B cell (primary cell): ENCODE measurements at regions of chr1 and their contacts with region 1.

Region 1: GRCh38 chr1:230642263-230642959 is at the start of gene COG2:
- DNase-seq: peak; percentile 96
- ATAC-seq: peak; percentile 87
- H3K4me3 ChIP-seq: peak within 1 kb of the TSS; percentile 58 to 93 (median 87)
- H3K4me3 Mint-ChIP-seq: peak within 1 kb of the TSS; percentile 99
- H3K27ac ChIP-seq: peak within 1 kb of the TSS; percentile 72
- H3K27ac Mint-ChIP-seq: peak within 1 kb of the TSS; percentile 98
- H3K4me1 ChIP-seq: peaks cover 28 to 35% of the 10 kb centered on the region in 2 donors
- H3K4me1 Mint-ChIP-seq: peaks cover 53% of the 10 kb centered on the region
- H3K27me3 ChIP-seq: peaks cover 0 to 10% (median 0%) of the 10 kb centered on the region in 4 experiments
- H3K27me3 Mint-ChIP-seq: peaks cover 23% of the 10 kb centered on the region
- CTCF ChIP-seq: peak; percentile 100
- total RNA-seq, gene COG2: 36.9 and 42.5 TPM in 2 replicates

Region 2: DNA sequence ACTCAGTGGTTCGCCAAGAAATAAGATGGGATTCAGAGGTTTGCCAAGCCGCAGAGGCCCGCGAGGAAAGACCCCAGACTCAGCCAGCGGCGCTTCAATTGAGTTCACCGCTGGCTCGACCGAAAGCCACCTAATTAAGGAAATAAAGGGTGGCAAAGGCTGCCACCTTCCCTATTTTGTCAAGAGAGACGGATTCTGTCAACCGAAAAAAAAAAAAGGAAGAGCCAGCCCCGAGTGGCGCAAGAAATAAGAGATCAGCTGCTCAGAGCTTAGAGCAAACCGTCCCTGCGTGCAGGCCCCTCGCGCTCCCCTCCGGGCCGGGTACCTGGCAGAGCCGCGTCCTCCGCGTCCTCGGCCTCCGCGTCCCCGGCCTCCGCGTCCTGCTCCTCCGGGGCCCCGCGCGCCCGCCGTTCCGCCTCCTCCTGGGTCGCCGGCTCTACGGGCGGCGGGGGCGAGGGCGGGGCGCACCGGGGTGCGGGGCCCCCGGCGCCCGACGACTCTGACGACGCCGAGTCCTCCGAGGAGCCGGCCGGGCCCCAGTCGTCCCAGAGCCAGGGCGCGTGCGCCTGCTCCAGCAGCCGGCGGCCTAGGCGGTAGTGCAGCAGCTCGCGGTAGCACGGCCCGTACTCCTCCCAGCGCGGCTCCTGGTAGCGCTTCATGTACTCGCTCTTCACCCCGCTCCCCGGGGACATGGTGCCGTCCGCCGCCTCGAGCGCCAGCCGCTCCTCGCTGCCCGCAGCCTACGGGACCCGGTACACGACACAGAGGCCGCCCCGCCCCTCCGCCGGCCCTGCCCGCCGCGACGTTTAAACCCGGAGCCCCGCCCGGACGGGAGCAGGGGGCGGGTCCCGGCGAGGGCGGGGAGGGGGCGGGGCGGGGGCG is 1300.4 kb before region 1 on chr1:
- CTCF ChIA-PET with region 1: no interaction called
- POLR2A ChIA-PET with region 1: no interaction called
- intact Hi-C with region 1: loop called (anchors 5 kb)
- DNase-seq: peak; percentile 91
- ATAC-seq: peak; percentile 82
- H3K4me3 ChIP-seq: peak overlapping the region; percentile 66 to 86 (median 80)
- H3K4me3 Mint-ChIP-seq: peak overlapping the region; percentile 88
- H3K27ac ChIP-seq: peak overlapping the region; percentile 24 to 79
- H3K27ac Mint-ChIP-seq: peak overlapping the region; percentile 90
- H3K4me1 ChIP-seq: peaks cover 21 to 23% of the 10 kb centered on the region in 2 donors
- H3K4me1 Mint-ChIP-seq: peaks cover 42% of the 10 kb centered on the region
- H3K27me3 ChIP-seq: peaks cover 0 to 12% (median 3%) of the 10 kb centered on the region in 4 experiments
- H3K27me3 Mint-ChIP-seq: peaks cover 20% of the 10 kb centered on the region
- CTCF ChIP-seq: no peak

Region 3: GRCh38 chr1:230661976-230662375 is 19.6 kb after region 1 on chr1:
- CTCF ChIA-PET with region 1: interaction called, 10 read pairs
- POLR2A ChIA-PET with region 1: no interaction called
- intact Hi-C with region 1: no loop called
- DNase-seq: no peak
- ATAC-seq: no peak
- H3K4me3 ChIP-seq: no peak overlapping the region
- H3K4me3 Mint-ChIP-seq: no peak overlapping the region
- H3K27ac ChIP-seq: no peak overlapping the region
- H3K27ac Mint-ChIP-seq: no peak overlapping the region
- H3K4me1 ChIP-seq: no peaks in the 10 kb centered on the region
- H3K4me1 Mint-ChIP-seq: peaks cover 2% of the 10 kb centered on the region
- H3K27me3 ChIP-seq: no peaks in the 10 kb centered on the region
- H3K27me3 Mint-ChIP-seq: no peaks in the 10 kb centered on the region
- CTCF ChIP-seq: no peak

Region 4: DNA sequence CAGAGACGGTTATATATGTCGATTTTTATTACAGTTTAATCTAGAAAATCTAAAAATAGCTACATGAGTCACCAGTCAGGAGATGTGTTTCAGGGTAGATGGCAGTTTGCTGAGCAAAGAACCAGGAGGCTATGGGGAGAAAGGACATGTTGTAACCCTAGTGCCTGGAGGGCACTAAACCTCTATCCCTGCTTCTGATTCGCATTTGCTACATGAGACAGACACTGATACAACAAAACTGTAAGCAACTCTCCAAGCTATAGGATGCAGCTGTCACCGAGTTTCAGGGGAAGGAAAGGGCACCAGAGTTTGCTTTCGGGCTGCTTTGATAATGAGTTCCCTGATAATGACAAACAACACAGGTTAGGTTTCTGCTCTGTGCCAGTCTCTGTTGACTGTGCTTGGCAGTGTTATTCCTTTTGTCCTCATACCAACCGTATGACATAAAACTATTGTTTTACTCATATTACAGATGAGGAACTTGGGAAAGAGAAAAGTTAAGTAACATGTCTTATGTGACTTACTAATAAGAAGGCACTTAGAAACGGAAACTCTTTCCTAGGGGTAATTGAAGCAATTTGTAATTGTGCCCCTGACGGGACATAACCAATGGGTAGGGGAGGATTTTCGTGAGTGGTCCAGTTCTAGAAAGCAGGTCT is 182.8 kb after region 1 on chr1:
- CTCF ChIA-PET with region 1: no interaction called
- POLR2A ChIA-PET with region 1: no interaction called
- intact Hi-C with region 1: no loop called
- DNase-seq: no peak
- ATAC-seq: no peak
- H3K4me3 ChIP-seq: no peak overlapping the region
- H3K4me3 Mint-ChIP-seq: no peak overlapping the region
- H3K27ac ChIP-seq: no peak overlapping the region
- H3K27ac Mint-ChIP-seq: no peak overlapping the region
- H3K4me1 ChIP-seq: no peaks in the 10 kb centered on the region
- H3K4me1 Mint-ChIP-seq: no peaks in the 10 kb centered on the region
- H3K27me3 ChIP-seq: no peaks in the 10 kb centered on the region
- H3K27me3 Mint-ChIP-seq: peaks cover 15% of the 10 kb centered on the region
- CTCF ChIP-seq: no peak

Region 5: DNA sequence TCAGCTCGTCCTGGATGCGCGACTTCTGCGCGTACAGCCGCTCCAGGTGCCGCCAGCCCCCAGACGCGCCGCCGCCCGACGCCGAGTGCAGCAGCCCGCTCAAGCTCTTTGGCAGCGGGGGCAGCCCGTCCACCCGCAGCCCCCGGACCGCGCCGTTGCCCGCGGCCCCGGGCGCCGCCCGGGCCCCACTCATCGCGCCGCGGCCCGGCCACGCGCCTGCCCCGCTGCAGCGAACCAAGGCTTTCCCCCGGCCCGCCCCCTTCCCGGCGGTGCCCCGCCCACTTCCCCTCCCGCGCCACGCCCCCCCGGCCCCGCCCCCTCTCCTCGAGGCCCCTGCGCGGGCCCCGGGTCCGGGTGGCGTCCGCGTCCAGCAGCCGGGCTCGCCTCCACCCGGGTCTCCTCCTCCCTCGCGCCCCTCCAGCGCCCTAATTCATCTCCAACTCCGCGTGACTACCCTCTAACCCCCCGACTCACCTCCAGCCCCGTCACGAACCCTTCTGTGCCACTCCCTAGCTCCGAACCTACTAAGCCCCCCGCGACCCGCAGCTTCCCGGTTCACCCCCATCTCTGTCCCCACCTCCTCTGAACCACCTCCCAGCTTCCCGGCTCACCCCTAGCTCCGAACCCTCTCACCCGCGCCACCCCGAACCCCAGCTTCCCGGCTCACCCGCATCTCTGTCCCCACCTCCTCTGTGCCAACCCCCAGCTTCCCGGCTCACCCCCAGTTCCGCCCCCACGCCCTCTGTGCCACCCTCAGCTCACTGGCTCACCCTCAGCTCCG is 397.8 kb after region 1 on chr1 and contains the start of gene FAM89A:
- CTCF ChIA-PET with region 1: no interaction called
- POLR2A ChIA-PET with region 1: no interaction called
- intact Hi-C with region 1: loop called (anchors 5 kb)
- DNase-seq: peak; percentile 84
- ATAC-seq: peak; percentile 82
- H3K4me3 ChIP-seq: peak within 1 kb of the TSS; percentile 6 to 85 (median 68)
- H3K4me3 Mint-ChIP-seq: peak within 1 kb of the TSS; percentile 86
- H3K27ac ChIP-seq: no peak within 1 kb of the TSS
- H3K27ac Mint-ChIP-seq: peak within 1 kb of the TSS; percentile 47
- H3K4me1 ChIP-seq: peaks cover 13% of the 10 kb centered on the region in 2 donors
- H3K4me1 Mint-ChIP-seq: peaks cover 16% of the 10 kb centered on the region
- H3K27me3 ChIP-seq: peaks cover 0 to 11% (median 3%) of the 10 kb centered on the region in 4 experiments
- H3K27me3 Mint-ChIP-seq: peaks cover 6% of the 10 kb centered on the region
- CTCF ChIP-seq: no peak
- total RNA-seq, gene FAM89A: 5.6 and 6.1 TPM in 2 replicates

Region 6: GRCh38 chr1:231240883-231241735 is 598.7 kb after region 1 on chr1 and contains the start of gene GNPAT:
- CTCF ChIA-PET with region 1: no interaction called
- POLR2A ChIA-PET with region 1: no interaction called
- intact Hi-C with region 1: loop called (anchors 1 kb)
- DNase-seq: peak; percentile 93
- ATAC-seq: peak; percentile 96
- H3K4me3 ChIP-seq: peak within 1 kb of the TSS; percentile 78 to 92 (median 88)
- H3K4me3 Mint-ChIP-seq: peak within 1 kb of the TSS; percentile 96
- H3K27ac ChIP-seq: peak within 1 kb of the TSS; percentile 76 to 87
- H3K27ac Mint-ChIP-seq: peak within 1 kb of the TSS; percentile 95
- H3K4me1 ChIP-seq: peaks cover 23 to 29% of the 10 kb centered on the region in 2 donors
- H3K4me1 Mint-ChIP-seq: peaks cover 68% of the 10 kb centered on the region
- H3K27me3 ChIP-seq: no peaks in the 10 kb centered on the region
- H3K27me3 Mint-ChIP-seq: no peaks in the 10 kb centered on the region
- CTCF ChIP-seq: no peak
- total RNA-seq, gene GNPAT: 48.0 and 49.0 TPM in 2 replicates

Region 7: DNA sequence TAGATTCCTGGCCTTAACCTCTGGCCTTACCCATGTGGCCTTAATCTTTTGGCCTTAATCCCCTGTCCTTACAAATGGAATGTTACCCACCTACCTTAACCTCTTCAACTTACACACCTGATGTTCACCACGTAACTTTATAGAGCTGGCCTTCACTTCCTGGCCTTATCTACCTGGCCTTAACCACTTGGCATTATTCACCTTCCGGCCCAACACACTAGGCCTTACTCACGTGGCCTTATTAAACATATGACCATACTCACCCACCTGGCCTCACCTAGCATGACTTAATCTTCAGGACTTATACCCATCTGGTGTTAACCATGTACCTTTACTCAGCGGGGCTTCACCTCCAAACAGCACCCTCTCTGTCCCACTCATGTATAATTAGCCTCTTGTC is 653.5 kb after region 1 on chr1:
- CTCF ChIA-PET with region 1: no interaction called
- POLR2A ChIA-PET with region 1: no interaction called
- intact Hi-C with region 1: no loop called
- DNase-seq: no peak
- ATAC-seq: no peak
- H3K4me3 ChIP-seq: no peak overlapping the region
- H3K4me3 Mint-ChIP-seq: no peak overlapping the region
- H3K27ac ChIP-seq: no peak overlapping the region
- H3K27ac Mint-ChIP-seq: no peak overlapping the region
- H3K4me1 ChIP-seq: no peaks in the 10 kb centered on the region
- H3K4me1 Mint-ChIP-seq: no peaks in the 10 kb centered on the region
- H3K27me3 ChIP-seq: no peaks in the 10 kb centered on the region
- H3K27me3 Mint-ChIP-seq: no peaks in the 10 kb centered on the region
- CTCF ChIP-seq: no peak